Prostate gland (tissue), 2 donors: ENCODE measurements at regions of chr5 and their contacts with region 1.

Region 1: DNA sequence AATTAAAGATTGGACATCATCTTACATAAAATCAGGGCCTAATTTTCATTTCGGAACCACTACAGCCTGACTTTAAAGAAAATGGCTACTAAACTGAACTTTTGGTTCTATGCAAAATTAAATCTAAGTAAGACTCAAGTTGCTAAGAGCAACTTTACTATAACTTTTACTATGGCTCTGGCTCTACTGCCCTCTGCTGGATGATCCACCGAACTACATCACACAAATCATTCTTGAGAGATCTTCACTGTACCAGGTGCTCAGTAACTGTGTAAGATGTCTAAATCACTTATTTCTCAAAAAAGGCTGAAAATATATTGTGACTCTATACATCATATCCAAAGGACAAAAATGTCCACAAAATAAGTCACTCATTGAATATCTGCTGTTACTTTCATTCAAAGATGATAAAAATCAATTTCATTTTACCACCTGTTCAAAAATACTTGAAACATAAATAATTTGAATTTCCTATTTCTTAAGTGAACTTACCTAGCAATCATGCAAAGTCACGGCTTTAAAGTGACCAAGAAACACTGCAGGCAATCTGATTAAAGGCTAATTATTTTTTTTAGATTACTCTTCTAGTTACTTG is 13.5 kb downstream of the MOCS2 start:
- DNase-seq: peak; percentile 73
- H3K4me3 ChIP-seq: no peak overlapping the region
- H3K27ac ChIP-seq: no peak overlapping the region
- H3K4me1 ChIP-seq: no peaks in the 10 kb centered on the region
- H3K27me3 ChIP-seq: no peaks in the 10 kb centered on the region
- CTCF ChIP-seq: peak; percentile 76 to 94 (median 90)
- POLR2A ChIP-seq: no peak

Region 2: DNA sequence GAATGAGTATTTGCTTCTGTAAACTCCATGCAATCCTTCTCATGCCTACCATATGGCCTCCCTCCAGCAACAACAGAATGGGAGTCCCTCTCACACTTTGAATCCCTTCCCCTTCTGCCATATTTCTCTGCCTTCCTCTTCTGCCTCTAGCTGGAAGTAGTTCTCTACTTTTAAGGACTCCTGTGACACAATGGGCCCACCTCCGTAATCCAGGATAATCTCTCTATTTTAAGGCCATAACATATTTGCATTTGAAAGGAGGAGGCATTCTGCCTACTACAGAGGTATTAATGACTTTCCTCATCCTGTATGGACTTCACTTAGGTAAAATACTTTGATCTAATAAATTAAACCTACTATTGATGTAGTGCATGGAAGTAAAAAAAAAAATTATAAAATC is 463.7 kb before region 1 on chr5:
- intact Hi-C with region 1: no loop called
- DNase-seq: no peak
- H3K4me3 ChIP-seq: no peak overlapping the region
- H3K27ac ChIP-seq: no peak overlapping the region
- H3K4me1 ChIP-seq: no peaks in the 10 kb centered on the region
- H3K27me3 ChIP-seq: no peaks in the 10 kb centered on the region
- CTCF ChIP-seq: no peak
- POLR2A ChIP-seq: no peak

Region 3: GRCh38 chr5:52787600-52788504 is 308.2 kb before region 1 on chr5 and contains the starts of genes ITGA1 and PELO:
- intact Hi-C with region 1: loop called (anchors 5 kb)
- DNase-seq: peak; percentile 58
- H3K4me3 ChIP-seq: peak within 1 kb of the TSS; percentile 48 to 52
- H3K27ac ChIP-seq: peak within 1 kb of the TSS; percentile 85 to 88
- H3K4me1 ChIP-seq: no peaks in the 10 kb centered on the region
- H3K27me3 ChIP-seq: no peaks in the 10 kb centered on the region
- CTCF ChIP-seq: peak; percentile 13 to 60 (median 30)
- POLR2A ChIP-seq: no peak
- total RNA-seq, gene ITGA1: 43.7 to 78.3 TPM
- total RNA-seq, gene PELO: 14.9 to 18.8 TPM

Region 4: DNA sequence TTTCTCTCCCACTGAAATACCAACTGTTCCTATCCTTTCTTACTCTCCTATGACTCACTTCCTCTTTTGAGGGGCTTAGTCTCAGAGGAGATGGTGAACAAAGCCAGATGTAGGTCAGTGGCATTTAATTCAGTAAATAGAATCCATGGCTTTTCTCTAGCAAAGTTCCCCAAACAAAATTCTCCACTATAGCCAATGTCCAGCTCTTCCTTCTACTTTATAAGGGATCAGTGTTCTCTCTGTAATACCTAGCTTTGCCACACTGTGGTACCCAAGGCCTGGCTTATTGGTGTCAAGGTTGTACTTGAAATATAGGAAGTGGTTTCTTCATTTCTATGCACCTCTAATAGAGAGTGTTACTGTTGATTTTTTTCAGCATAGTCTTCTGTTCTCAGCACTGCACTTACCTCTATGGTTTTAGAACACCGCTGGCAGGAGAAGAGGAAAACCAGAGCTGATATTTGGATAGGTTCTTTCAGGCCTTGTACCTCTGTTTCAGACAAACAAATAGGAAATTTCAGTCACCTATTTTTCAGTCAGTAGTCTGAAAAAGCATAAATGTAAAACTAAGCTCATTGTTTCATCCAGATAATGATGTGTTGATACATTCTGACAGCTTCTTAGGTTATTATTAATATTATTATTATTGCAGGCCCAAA is 147.5 kb before region 1 on chr5:
- intact Hi-C with region 1: loop called (anchors 2 kb)
- DNase-seq: peak; percentile 76
- H3K4me3 ChIP-seq: no peak overlapping the region
- H3K27ac ChIP-seq: peak overlapping the region; percentile 17 to 37
- H3K4me1 ChIP-seq: no peaks in the 10 kb centered on the region
- H3K27me3 ChIP-seq: no peaks in the 10 kb centered on the region
- CTCF ChIP-seq: peak; percentile 36 to 92 (median 80)
- POLR2A ChIP-seq: no peak